WTC11 (cell line): ENCODE measurements at regions of chr9 and their contacts with region 1.

Region 1: DNA sequence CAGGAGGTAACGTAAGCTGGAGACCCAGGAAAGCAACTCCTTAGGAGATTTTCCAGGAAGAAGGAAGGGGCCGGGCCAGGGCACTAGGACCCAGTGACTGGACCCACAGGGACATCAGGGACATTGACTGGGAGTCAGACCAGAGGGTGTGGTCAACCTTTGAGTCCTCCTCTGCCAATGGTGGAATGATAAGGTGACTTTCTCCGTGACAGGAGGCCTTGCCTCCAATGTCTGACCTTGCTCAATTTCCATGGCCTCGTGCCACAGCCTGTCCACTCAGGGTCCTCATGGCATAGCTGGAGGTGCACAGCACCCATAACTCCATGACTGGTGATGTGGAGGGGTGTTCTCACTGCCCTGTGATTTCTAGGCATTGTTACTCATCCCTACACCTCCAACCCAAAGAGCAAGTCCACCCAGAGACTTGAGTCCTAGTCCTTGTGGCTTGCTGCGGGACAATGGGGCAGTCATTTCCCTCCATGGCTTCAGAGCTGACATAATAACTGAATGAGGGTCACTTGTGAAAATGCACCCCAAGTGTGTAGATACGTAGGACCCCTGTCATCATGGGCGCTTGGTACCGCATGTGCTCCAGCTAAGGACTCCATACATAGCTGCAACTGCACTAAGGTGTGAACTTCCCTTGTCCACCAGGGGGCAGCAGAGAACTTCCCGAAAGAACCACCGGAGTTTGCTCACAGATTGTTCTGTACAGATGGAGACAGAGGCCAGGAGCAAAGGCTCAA is 4.1 kb upstream of the AMBP start:
- DNase-seq: peak; percentile 92
- ATAC-seq: peak; percentile 91
- H3K4me3 Mint-ChIP-seq: no peak overlapping the region
- H3K27ac Mint-ChIP-seq: no peak overlapping the region
- H3K4me1 Mint-ChIP-seq: no peaks in the 10 kb centered on the region
- H3K27me3 Mint-ChIP-seq: peaks cover 35% of the 10 kb centered on the region
- CTCF ChIP-seq: peak; percentile 92

Region 2: GRCh38 chr9:114059047-114059803 is 23.0 kb before region 1 on chr9:
- CTCF ChIA-PET with region 1: interaction called, 11 read pairs
- POLR2A ChIA-PET with region 1: no interaction called
- DNase-seq: no peak
- ATAC-seq: no peak
- H3K4me3 Mint-ChIP-seq: no peak overlapping the region
- H3K27ac Mint-ChIP-seq: no peak overlapping the region
- H3K4me1 Mint-ChIP-seq: 0 out of 2 replicates have a peak, but pooled peaks cover 3% of the 10 kb centered on the region
- H3K27me3 Mint-ChIP-seq: no peaks in the 10 kb centered on the region; the same call in 1 of the 2 replicates
- CTCF ChIP-seq: no peak

Region 3: DNA sequence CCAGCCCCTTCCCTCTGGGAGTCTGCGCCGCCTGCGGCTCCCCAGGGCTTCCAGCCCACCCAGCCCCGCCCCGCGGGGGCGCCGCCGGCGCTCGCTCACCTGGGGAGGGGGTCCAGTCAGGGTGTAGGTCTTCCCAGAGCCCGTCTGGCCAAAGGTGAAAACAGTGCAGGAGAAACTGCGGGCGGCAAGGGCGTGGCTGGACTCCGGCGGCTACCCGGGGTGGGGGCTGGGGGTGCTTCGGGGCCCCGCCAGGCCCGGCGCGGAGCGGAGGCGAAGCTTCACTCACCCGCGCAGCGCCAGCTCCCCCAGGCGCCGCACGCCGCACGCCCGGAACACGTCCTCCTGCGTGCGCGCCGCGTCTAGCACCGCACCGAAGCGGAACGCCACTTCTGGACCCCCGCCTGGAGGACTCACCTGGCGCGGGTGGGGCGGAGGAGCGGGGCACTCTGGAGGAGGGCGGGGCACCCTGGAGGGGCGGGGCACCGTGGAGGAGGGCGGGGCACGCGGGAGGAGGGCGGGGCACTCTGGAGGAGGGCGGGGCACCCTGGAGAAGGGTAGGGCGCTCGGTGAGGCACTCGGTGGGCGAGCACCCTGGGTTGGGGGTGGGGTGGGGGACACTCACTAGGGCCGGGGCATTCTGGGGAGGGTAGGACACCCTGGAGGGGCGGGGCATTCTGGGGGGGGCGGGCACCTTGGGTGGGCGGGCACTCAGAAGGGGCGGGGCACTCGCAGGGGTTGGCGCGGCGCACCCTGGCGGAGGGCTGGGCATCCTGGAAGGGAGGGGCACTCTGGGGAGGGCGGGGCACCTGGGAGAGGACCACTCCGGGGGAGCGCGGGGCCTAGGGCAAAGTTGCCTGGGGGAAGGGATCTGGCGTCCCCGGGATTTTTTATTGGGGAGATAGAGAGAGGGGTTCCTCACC is 16.1 kb after region 1 on chr9:
- CTCF ChIA-PET with region 1: interaction called, 101 read pairs
- POLR2A ChIA-PET with region 1: interaction called, 3 read pairs
- DNase-seq: peak; percentile 89
- ATAC-seq: peak; percentile 87
- H3K4me3 Mint-ChIP-seq: peak overlapping the region; percentile 87
- H3K27ac Mint-ChIP-seq: no peak overlapping the region
- H3K4me1 Mint-ChIP-seq: peaks cover 18% of the 10 kb centered on the region
- H3K27me3 Mint-ChIP-seq: peaks cover 70% of the 10 kb centered on the region
- CTCF ChIP-seq: no peak

Region 4: GRCh38 chr9:114299286-114300152 is 217.3 kb after region 1 on chr9:
- CTCF ChIA-PET with region 1: interaction called, 12 read pairs
- POLR2A ChIA-PET with region 1: no interaction called
- DNase-seq: no peak
- ATAC-seq: no peak
- H3K4me3 Mint-ChIP-seq: no peak overlapping the region
- H3K27ac Mint-ChIP-seq: no peak overlapping the region
- H3K4me1 Mint-ChIP-seq: no peaks in the 10 kb centered on the region
- H3K27me3 Mint-ChIP-seq: no peaks in the 10 kb centered on the region
- CTCF ChIP-seq: no peak